Caco-2 (cell line): ENCODE measurements at regions of chr9 and their contacts with region 1.

Region 1: DNA sequence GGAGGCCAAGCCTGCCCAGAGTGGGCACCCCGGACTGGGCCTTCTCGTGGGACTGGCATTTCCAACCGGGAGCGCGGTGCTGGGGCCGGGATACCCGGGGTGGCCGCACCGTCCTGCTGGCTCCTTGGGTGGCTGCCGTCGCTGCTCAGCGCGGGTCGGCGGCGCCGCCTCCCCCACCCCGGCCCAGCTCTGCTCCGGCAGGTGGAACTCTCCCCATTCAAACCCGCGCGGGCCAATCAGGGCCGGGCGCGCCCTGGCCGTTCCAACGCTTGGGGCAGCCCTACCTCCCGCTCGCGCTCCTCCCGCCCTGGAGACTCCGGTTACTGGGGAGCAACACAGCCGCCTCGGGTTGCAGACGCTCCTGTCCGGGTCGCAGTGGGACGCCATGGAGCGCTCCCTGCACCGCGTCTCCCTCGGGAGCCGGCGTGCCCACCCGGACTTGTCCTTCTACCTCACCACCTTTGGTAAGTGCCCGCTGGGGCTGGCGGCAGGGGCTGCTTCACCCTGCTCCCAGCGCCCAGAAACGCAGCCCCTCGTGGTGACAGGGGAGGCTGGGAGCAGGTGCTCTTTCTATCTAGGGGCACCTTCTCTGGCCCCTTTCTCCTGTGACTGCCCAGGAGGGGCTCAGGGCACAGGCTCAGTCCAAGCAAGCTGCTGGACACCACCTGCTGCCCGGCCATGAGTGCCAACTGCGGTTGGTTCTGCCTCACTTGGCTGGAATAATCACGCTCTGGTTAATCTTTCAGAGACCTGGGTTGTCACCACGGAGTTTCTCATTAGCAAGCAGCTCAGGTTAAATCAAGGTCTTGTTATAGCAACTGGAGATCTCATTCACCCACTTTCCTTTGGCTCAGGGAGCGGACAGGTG is at the start of gene RGS3:
- DNase-seq: peak; percentile 91 to 93
- H3K4me3 ChIP-seq: peak within 1 kb of the TSS; percentile 83
- H3K4me3 Mint-ChIP-seq: peak within 1 kb of the TSS; percentile 94
- H3K27ac Mint-ChIP-seq: peak within 1 kb of the TSS; percentile 90
- H3K4me1 ChIP-seq: peaks cover 30% of the 10 kb centered on the region
- H3K4me1 Mint-ChIP-seq: peaks cover 36% of the 10 kb centered on the region
- H3K27me3 ChIP-seq: no peaks in the 10 kb centered on the region
- H3K27me3 Mint-ChIP-seq: no peaks in the 10 kb centered on the region
- CTCF ChIP-seq: peak in 1 of 2 experiments; percentile 13
- total RNA-seq, gene RGS3: 70.8 and 71.1 TPM in 2 replicates

Region 2: DNA sequence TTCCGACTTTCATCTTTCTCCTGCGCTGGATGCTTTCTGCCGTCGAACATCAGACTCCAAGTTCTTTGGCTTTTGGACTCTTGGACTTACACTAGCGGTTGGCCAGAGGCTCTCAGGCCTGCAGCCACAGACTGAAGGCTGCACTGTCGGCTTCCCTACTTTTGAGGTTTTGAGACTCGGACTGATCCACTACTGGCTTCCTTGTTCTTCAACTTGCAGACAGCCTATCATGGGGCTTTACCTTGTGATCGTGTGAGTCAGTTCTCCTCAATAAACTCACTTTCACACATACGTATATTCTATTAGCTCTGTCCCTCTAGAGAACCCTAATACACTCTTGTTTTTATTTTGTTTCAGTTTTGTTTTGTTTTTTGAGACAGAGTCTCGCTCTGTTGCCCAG is 252.8 kb before region 1 on chr9:
- CTCF ChIA-PET with region 1: no interaction called
- POLR2A ChIA-PET with region 1: no interaction called
- intact Hi-C with region 1: no loop called
- DNase-seq: no peak
- H3K4me3 ChIP-seq: no peak overlapping the region
- H3K4me3 Mint-ChIP-seq: no peak overlapping the region
- H3K27ac Mint-ChIP-seq: no peak overlapping the region
- H3K4me1 ChIP-seq: no peaks in the 10 kb centered on the region
- H3K4me1 Mint-ChIP-seq: no peaks in the 10 kb centered on the region
- H3K27me3 ChIP-seq: no peaks in the 10 kb centered on the region
- H3K27me3 Mint-ChIP-seq: no peaks in the 10 kb centered on the region
- CTCF ChIP-seq: no peak

Region 3: GRCh38 chr9:113516840-113517577 is 53.4 kb after region 1 on chr9:
- CTCF ChIA-PET with region 1: no interaction called
- POLR2A ChIA-PET with region 1: no interaction called
- intact Hi-C with region 1: loop called (anchors 5 kb)
- DNase-seq: no peak
- H3K4me3 ChIP-seq: no peak overlapping the region
- H3K4me3 Mint-ChIP-seq: no peak overlapping the region
- H3K27ac Mint-ChIP-seq: no peak overlapping the region
- H3K4me1 ChIP-seq: peaks cover 23% of the 10 kb centered on the region
- H3K4me1 Mint-ChIP-seq: peaks cover 25% of the 10 kb centered on the region
- H3K27me3 ChIP-seq: no peaks in the 10 kb centered on the region
- H3K27me3 Mint-ChIP-seq: no peaks in the 10 kb centered on the region
- CTCF ChIP-seq: no peak